Activated naive CD8-positive, alpha-beta T cell treated with anti-CD3 and anti-CD28 coated beads, Interleukin-2, amount 10 ng/mL, durations not matched to agents 7 days and 5 days (primary cell): ENCODE measurements at regions of chr19 and their contacts with region 1.

Region 1: DNA sequence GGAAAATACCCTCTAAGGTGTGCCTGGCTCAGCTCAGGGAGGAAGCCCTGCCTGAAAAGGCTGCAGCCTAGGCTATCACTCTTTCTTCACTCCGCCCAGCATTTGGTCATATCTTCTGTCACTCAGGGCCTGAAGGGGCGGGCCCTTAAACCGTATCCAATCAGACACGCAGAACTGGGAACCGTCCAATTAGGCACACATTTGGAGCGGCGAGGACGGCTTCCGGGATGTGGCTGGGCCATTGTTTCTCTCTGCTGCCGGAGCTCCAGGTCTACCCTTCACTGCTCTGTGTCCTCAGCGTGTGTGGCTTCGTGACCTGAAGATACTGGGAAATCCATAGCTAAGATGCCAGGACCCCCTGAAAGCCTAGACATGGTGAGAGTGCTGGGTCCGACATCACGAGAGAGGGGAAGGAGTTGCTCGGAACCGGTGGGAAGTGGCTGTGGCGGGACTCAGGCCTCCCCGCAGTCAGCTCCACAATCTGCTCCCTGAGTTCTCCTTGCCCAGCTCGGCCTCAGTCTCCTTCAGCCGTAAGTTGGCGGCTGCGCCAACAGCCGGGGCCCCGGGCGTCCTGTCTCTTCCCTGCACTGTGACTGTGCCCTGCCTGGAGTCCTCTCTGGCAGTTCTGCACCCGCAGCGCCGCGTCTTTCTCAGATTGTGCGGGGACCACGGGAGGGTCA is at the start of gene ZNF493:
- DNase-seq: peak; percentile 84
- ATAC-seq: peak; percentile 99
- H3K4me3 Mint-ChIP-seq: peak within 1 kb of the TSS; percentile 99
- H3K27ac Mint-ChIP-seq: peak within 1 kb of the TSS; percentile 97
- H3K4me1 Mint-ChIP-seq: peaks cover 3% of the 10 kb centered on the region
- H3K27me3 Mint-ChIP-seq: no peaks in the 10 kb centered on the region
- total RNA-seq, gene ZNF493: 34.5 to 39.4 TPM

Region 2: GRCh38 chr19:21358768-21359451 is 38.1 kb before region 1 on chr19 and contains the start of gene ZNF738:
- POLR2A ChIA-PET with region 1: interaction called, 22 read pairs
- DNase-seq: peak; percentile 80
- ATAC-seq: peak; percentile 97
- H3K4me3 Mint-ChIP-seq: peak within 1 kb of the TSS; percentile 99
- H3K27ac Mint-ChIP-seq: peak within 1 kb of the TSS; percentile 98
- H3K4me1 Mint-ChIP-seq: peaks cover 7% of the 10 kb centered on the region
- H3K27me3 Mint-ChIP-seq: no peaks in the 10 kb centered on the region
- total RNA-seq, gene ZNF738: 13.9 to 16.4 TPM

Region 3: GRCh38 chr19:21463449-21464105 is 66.5 kb after region 1 on chr19:
- POLR2A ChIA-PET with region 1: interaction called, 11 read pairs
- DNase-seq: peak; percentile 51
- ATAC-seq: peak; percentile 97
- H3K4me3 Mint-ChIP-seq: peak overlapping the region; percentile 92
- H3K27ac Mint-ChIP-seq: peak overlapping the region; percentile 90
- H3K4me1 Mint-ChIP-seq: peaks cover 4% of the 10 kb centered on the region
- H3K27me3 Mint-ChIP-seq: peaks cover 3% of the 10 kb centered on the region